ENCODE measurements at regions of chr13 and their contacts with region 1.

Region 1: GRCh38 chr13:112606109-112607001 is 18.4 kb upstream of the TUBGCP3 start:
- DNase-seq: peak; percentile 90
- ATAC-seq: peak; percentile 100
- H3K4me3 Mint-ChIP-seq: peak overlapping the region; percentile 79
- H3K27ac Mint-ChIP-seq: no peak overlapping the region
- H3K4me1 Mint-ChIP-seq: peaks cover 11% of the 10 kb centered on the region
- H3K27me3 Mint-ChIP-seq: peaks cover 33% of the 10 kb centered on the region

Region 2: GRCh38 chr13:112270951-112271350 is 335.4 kb before region 1 on chr13:
- CTCF ChIA-PET with region 1: no interaction called
- POLR2A ChIA-PET with region 1: no interaction called
- DNase-seq: no peak
- ATAC-seq: no peak
- H3K4me3 Mint-ChIP-seq: no peak overlapping the region
- H3K27ac Mint-ChIP-seq: no peak overlapping the region
- H3K4me1 Mint-ChIP-seq: no peaks in the 10 kb centered on the region
- H3K27me3 Mint-ChIP-seq: peaks cover 4% of the 10 kb centered on the region

Region 3: GRCh38 chr13:112587764-112588489 is 18.4 kb before region 1 on chr13 and contains the start of gene TUBGCP3:
- CTCF ChIA-PET with region 1: interaction called, 13 read pairs
- POLR2A ChIA-PET with region 1: interaction called, 4 read pairs
- DNase-seq: peak; percentile 81
- ATAC-seq: peak; percentile 90
- H3K4me3 Mint-ChIP-seq: peak within 1 kb of the TSS; percentile 96
- H3K27ac Mint-ChIP-seq: peak within 1 kb of the TSS; percentile 93
- H3K4me1 Mint-ChIP-seq: peaks cover 38% of the 10 kb centered on the region
- H3K27me3 Mint-ChIP-seq: peaks cover 3% of the 10 kb centered on the region
- total RNA-seq, gene TUBGCP3: 57.4 to 66.5 TPM

Region 4: GRCh38 chr13:112616586-112617362 is 10.4 kb after region 1 on chr13:
- CTCF ChIA-PET with region 1: interaction called, 12 read pairs
- POLR2A ChIA-PET with region 1: no interaction called
- DNase-seq: peak; percentile 39
- ATAC-seq: no peak
- H3K4me3 Mint-ChIP-seq: no peak overlapping the region
- H3K27ac Mint-ChIP-seq: no peak overlapping the region
- H3K4me1 Mint-ChIP-seq: no peaks in the 10 kb centered on the region
- H3K27me3 Mint-ChIP-seq: peaks cover 12% of the 10 kb centered on the region

Region 5: DNA sequence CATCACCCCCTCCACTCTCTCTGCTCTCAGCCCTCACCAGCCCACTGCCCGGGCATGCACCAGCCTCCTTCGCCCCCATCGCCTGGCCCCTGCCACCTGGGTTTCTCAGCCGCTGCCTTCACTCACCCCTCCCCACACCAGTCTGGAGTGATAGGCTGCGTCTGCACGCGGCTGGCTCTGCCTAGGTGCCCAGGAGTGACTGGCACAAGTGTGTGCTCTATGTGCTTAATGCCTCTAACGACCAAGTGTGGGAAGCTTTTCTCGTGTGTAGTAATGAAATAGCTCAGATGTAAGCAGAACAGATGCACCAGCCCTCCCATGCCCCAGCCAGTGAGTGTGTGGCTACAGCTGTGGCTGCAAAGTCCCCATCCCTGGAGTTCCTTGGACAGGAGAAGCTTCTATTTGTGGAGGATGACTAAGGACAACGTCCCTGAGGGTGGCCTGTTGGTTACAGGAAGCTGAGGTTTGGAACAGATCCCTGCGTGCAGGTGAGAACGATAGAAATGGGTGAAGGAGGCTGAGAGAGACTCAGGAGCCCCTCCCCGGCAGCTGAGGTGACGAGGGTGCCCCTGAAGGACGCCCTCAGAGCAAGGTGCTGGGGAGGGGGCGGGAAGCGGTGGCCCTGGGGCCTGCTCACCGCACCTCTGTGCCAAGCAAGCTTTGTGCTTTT is 119.1 kb after region 1 on chr13:
- CTCF ChIA-PET with region 1: no interaction called
- POLR2A ChIA-PET with region 1: no interaction called
- DNase-seq: peak; percentile 34
- ATAC-seq: peak; percentile 63
- H3K4me3 Mint-ChIP-seq: no peak overlapping the region
- H3K27ac Mint-ChIP-seq: peak overlapping the region; percentile 65
- H3K4me1 Mint-ChIP-seq: peaks cover 27% of the 10 kb centered on the region
- H3K27me3 Mint-ChIP-seq: no peaks in the 10 kb centered on the region